ENCODE measurements at regions of chr4 and their contacts with region 1.

Region 1: DNA sequence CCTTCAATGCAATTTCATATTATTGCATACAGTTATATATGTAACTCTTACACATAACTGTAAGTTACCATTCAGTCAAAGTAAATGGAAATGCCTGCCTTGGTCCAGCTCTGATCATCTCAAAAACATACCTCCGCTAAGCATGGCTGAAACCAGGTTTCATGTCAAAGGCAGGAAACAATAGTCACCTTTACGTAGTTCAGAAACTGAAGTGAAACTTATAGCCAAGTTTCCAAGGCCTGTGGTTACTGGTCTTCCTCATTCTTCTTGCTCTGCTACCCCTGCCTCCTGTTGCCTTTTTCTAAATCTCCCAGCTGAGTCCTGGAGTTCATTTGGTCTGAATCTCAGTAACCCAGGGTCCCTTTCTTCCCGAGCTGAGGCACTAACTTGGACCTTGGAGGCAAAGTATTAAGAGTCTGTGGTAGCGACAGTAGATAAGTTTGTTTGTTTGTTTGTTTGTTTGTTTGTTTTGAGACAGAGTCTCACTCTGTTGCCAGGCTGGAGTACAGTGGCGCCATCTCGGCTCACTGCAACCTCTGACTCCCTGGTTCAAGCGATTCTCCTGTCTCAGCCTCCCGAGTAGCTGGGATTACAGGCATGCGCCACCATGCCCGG is 30.8 kb downstream of the DAPP1 start:
- DNase-seq: peak; percentile 50
- ATAC-seq: peak; percentile 57
- H3K4me3 Mint-ChIP-seq: peak overlapping the region; percentile 43
- H3K27ac Mint-ChIP-seq: peak overlapping the region; percentile 97
- H3K4me1 Mint-ChIP-seq: peaks cover 73% of the 10 kb centered on the region
- H3K27me3 Mint-ChIP-seq: no peaks in the 10 kb centered on the region

Region 2: DNA sequence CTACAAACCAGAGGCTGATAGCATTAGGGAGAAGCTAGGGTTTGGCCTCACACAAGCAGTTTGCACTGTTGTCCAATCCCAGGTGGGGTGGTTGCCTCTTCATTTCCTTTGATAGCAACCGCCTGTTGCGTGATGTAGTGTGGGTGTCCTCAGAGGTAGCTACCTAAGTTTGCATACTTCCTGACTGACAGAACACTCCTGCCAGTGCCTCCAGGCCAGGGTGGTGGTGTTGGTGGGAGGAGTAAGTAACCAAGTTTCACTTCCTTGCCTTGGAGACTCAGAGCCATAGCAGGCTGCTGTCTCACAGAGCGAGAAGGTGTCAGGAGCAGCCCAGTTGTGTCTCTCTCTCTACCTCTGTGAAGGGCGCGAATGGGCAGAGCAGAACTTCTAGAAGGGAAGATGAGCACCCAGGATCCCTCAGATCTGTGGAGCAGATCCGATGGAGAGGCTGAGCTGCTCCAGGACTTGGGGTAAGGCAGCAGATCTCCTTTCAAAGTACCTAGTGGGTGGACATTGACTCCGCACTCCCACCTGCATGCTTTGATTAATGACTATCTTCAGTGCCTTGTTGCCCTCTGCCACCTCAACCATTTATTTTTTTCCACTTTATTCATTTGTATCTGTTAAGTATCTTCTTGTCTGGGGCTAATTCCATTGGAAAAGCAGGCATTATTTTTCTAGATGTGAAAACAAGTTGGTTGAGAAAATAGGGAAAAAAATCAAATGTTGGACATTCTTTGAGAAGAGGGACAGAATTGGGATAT is 30.7 kb before region 1 on chr4 and contains the start of gene DAPP1:
- CTCF ChIA-PET with region 1: interaction called, 17 read pairs
- DNase-seq: peak; percentile 93
- ATAC-seq: peak; percentile 97
- H3K4me3 Mint-ChIP-seq: peak within 1 kb of the TSS; percentile 77
- H3K27ac Mint-ChIP-seq: peak within 1 kb of the TSS; percentile 91
- H3K4me1 Mint-ChIP-seq: peaks cover 75% of the 10 kb centered on the region
- H3K27me3 Mint-ChIP-seq: no peaks in the 10 kb centered on the region
- total RNA-seq, gene DAPP1: 24.6 to 25.3 TPM

Region 3: GRCh38 chr4:99861120-99861905 is 13.8 kb after region 1 on chr4:
- CTCF ChIA-PET with region 1: interaction called, 21 read pairs
- DNase-seq: peak; percentile 73
- ATAC-seq: peak; percentile 75
- H3K4me3 Mint-ChIP-seq: no peak overlapping the region
- H3K27ac Mint-ChIP-seq: peak overlapping the region; percentile 75
- H3K4me1 Mint-ChIP-seq: peaks cover 40% of the 10 kb centered on the region
- H3K27me3 Mint-ChIP-seq: no peaks in the 10 kb centered on the region